A549 (cell line): ENCODE measurements at regions of chr4 and their contacts with region 1.

Region 1: DNA sequence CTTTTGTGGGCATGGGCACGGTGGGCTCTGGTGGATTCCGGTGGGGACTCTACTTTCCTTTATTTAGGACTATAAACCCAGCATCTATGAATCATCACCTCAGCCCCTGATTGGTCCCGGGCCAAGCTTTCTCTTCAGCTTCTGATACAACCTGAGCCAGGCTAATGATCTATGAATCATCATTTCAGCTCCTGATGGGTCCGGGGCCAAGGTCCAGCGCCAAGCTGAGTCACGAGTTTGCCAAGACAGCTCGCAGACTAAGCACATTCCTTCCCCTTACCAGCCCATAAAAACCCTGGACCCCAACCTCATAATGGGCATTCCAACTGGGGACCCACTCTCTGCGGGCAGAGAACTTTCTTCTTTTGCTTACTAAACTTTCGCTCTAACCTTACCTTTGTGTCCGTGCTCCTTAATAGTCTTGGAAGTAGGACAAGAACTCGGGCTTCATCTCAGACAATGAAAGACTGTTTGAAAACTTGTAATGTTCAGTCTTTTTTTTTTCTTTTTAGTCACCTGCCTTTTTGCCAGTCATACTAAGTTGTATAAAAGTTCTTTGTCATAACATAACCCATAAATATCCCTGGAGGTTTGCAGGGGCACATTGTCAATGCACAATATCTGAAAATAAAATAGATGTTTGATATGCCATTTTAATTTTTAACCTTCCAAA is 904.9 kb upstream of the EPHA5 start:
- DNase-seq: peak; percentile 66 to 95
- ATAC-seq: peak; percentile 97 to 98
- H3K4me3 ChIP-seq: peak overlapping the region; percentile 19; the same call in 2 of the 3 replicates
- H3K27ac ChIP-seq: peak overlapping the region; percentile 80 to 87
- H3K4me1 ChIP-seq: peaks cover 48% of the 10 kb centered on the region
- CTCF ChIP-seq: no peak
- EP300 ChIP-seq: peak in 1 of 2 experiments; percentile 47; a peak in 2 of 5 replicates
- POLR2A ChIP-seq: no peak
- RAD21 ChIP-seq: peak in 1 of 2 experiments; percentile 28; a peak in 3 of 5 replicates

Region 2: GRCh38 chr4:66564901-66565651 is 10.1 kb before region 1 on chr4:
- CTCF ChIA-PET with region 1: no interaction called
- POLR2A ChIA-PET with region 1: interaction called, 26 read pairs
- DNase-seq: peak in 1 of 2 experiments; percentile 95
- ATAC-seq: peak; percentile 92 to 94
- H3K4me3 ChIP-seq: peak overlapping the region; percentile 33
- H3K27ac ChIP-seq: peak overlapping the region; percentile 89 to 95
- H3K4me1 ChIP-seq: peaks cover 29% of the 10 kb centered on the region
- CTCF ChIP-seq: no peak
- EP300 ChIP-seq: peak; percentile 55 to 93; a peak in 3 of 5 replicates
- POLR2A ChIP-seq: no peak
- RAD21 ChIP-seq: peak; percentile 22 to 25; a peak in 4 of 5 replicates

Region 3: DNA sequence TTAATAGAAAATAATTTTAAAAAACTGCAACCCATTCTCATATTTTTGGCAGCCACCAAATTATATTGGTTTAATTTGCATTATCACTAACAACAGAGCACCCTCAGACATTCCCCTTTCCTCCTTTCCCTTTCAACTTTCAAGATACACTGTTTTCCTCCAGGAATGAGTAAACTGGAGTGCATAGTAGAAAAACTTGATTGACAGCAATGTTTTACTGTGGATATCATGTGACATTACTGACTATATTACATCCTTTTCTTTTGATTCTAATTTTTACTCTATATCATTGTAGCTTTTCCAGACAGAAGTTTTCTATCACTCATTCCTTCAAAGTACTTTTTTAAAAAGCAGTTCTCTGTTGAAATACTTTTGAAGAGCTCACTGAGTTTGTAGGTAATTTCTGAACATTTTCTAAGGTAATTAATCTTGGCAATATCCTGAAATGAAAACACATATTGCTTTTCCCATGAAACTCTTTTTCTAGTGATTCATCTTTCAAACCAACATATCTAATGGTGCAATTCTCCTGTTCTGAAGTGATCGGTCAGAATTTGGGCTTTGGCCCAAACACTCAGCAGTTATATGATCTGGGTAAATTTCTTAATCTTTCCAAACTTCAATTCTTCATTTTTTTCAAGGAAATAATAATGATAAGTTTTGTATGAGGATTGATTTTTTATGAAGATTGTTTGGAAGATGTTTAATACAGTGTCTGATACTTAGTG is 15.5 kb after region 1 on chr4:
- CTCF ChIA-PET with region 1: no interaction called
- POLR2A ChIA-PET with region 1: no interaction called
- DNase-seq: no peak
- ATAC-seq: no peak
- H3K4me3 ChIP-seq: no peak overlapping the region
- H3K27ac ChIP-seq: no peak overlapping the region
- H3K4me1 ChIP-seq: no peaks in the 10 kb centered on the region
- CTCF ChIP-seq: no peak
- EP300 ChIP-seq: no peak
- POLR2A ChIP-seq: no peak
- RAD21 ChIP-seq: no peak